ENCODE measurements at regions of chr5 and their contacts with region 1.

Region 1: GRCh38 chr5:149228618-149229297 is 42.9 kb upstream of the AFAP1L1 start:
- DNase-seq: peak in 4 of 5 donors; percentile 54 to 72 (median 66)
- ATAC-seq: peak; percentile 87 to 94 (median 92)
- H3K4me3 ChIP-seq: no peak overlapping the region
- H3K27ac ChIP-seq: peak overlapping the region; percentile 11 to 78 (median 64)
- H3K4me1 ChIP-seq: peaks cover 0 to 40% (median 21%) of the 10 kb centered on the region in 12 donors
- H3K27me3 ChIP-seq: no peaks in the 10 kb centered on the region
- CTCF ChIP-seq: peak; percentile 52 to 89 (median 84)
- POLR2A ChIP-seq: no peak

Region 2: GRCh38 chr5:149063017-149063687 is 165.6 kb before region 1 on chr5 and contains the start of gene SH3TC2:
- intact Hi-C with region 1: loop called in 1 of 10 experiments (anchors 10 kb)
- DNase-seq: peak; percentile 69 to 82 (median 74)
- ATAC-seq: peak; percentile 81 to 91 (median 86)
- H3K4me3 ChIP-seq: peak within 1 kb of the TSS in 2 of 12 donors; percentile 3 to 4
- H3K27ac ChIP-seq: peak within 1 kb of the TSS; percentile 63 to 92 (median 80)
- H3K4me1 ChIP-seq: peaks cover 10 to 61% (median 54%) of the 10 kb centered on the region in 12 donors
- H3K27me3 ChIP-seq: no peaks in the 10 kb centered on the region
- CTCF ChIP-seq: no peak
- POLR2A ChIP-seq: no peak
- total RNA-seq, gene SH3TC2: 2.4 to 12.7 (median 5.9) TPM

Region 3: DNA sequence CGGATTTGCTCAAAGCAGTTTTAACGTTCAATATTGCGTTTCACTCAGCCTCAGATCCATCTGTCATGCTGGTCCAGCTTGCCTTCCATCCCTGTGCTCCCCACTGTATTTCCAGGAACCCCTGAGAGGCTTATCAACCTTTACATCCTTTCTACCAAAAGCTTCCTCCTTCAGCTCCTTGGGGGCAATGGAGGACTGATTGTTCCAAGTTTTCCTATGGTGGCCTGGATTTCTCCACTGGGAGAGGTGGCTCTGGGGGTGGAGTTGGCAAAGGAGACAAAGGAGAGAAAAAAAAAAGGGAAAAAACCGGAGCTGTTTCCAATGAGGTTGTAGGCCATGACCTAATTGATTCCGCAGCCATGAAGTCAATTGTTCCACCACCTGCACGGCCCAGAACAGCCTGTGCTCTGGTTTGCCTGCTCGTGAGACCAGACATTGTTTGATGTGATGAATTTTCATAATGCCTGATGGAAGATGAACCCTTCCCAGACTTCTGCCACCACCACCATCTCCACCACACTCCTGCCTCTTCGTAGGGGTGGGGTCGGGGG is 33.3 kb before region 1 on chr5:
- intact Hi-C with region 1: loop called in 1 of 10 experiments (anchors 5 kb)
- DNase-seq: peak; percentile 50 to 68 (median 62)
- ATAC-seq: peak; percentile 85 to 90 (median 88)
- H3K4me3 ChIP-seq: no peak overlapping the region
- H3K27ac ChIP-seq: peak overlapping the region; percentile 47 to 86 (median 83)
- H3K4me1 ChIP-seq: peaks cover 3 to 53% (median 28%) of the 10 kb centered on the region in 12 donors
- H3K27me3 ChIP-seq: no peaks in the 10 kb centered on the region
- CTCF ChIP-seq: no peak
- POLR2A ChIP-seq: no peak

Region 4: GRCh38 chr5:149381987-149382340 is 153.2 kb after region 1 on chr5:
- intact Hi-C with region 1: no loop called
- DNase-seq: peak; percentile 83 to 91 (median 85)
- ATAC-seq: peak; percentile 59 to 83 (median 76)
- H3K4me3 ChIP-seq: peak overlapping the region in 4 of 12 donors; percentile 11 to 30 (median 16)
- H3K27ac ChIP-seq: peak overlapping the region; percentile 25 to 98 (median 90)
- H3K4me1 ChIP-seq: peaks cover 8 to 69% (median 41%) of the 10 kb centered on the region in 12 donors
- H3K27me3 ChIP-seq: no peaks in the 10 kb centered on the region
- CTCF ChIP-seq: peak; percentile 92 to 98 (median 96)
- POLR2A ChIP-seq: no peak

Measured in heart left ventricle (tissue), 16 donors.